Activated naive CD4-positive, alpha-beta T cell treated with anti-CD3 and anti-CD28 coated beads for 36 hours (primary cell): ENCODE measurements at regions of chr18 and their contacts with region 1.

Region 1: GRCh38 chr18:42126586-42126985 is 171.6 kb downstream of the PIK3C3 start:
- DNase-seq: no peak
- H3K4me3 Mint-ChIP-seq: no peak overlapping the region
- H3K27ac Mint-ChIP-seq: no peak overlapping the region
- H3K4me1 Mint-ChIP-seq: no peaks in the 10 kb centered on the region
- H3K27me3 Mint-ChIP-seq: peaks cover 12% of the 10 kb centered on the region

Region 2: GRCh38 chr18:41457765-41458326 is 668.7 kb before region 1 on chr18:
- CTCF ChIA-PET with region 1: no interaction called
- intact Hi-C with region 1: no loop called
- DNase-seq: no peak
- H3K4me3 Mint-ChIP-seq: no peak overlapping the region
- H3K27ac Mint-ChIP-seq: no peak overlapping the region
- H3K4me1 Mint-ChIP-seq: no peaks in the 10 kb centered on the region
- H3K27me3 Mint-ChIP-seq: no peaks in the 10 kb centered on the region

Region 3: GRCh38 chr18:42830936-42831335 is 704.4 kb after region 1 on chr18:
- CTCF ChIA-PET with region 1: no interaction called
- intact Hi-C with region 1: loop called (anchors 5 kb)
- DNase-seq: no peak
- H3K4me3 Mint-ChIP-seq: no peak overlapping the region
- H3K27ac Mint-ChIP-seq: no peak overlapping the region
- H3K4me1 Mint-ChIP-seq: no peaks in the 10 kb centered on the region
- H3K27me3 Mint-ChIP-seq: no peaks in the 10 kb centered on the region